CD8-positive, alpha-beta T cell (primary cell): ENCODE measurements at regions of chr19 and their contacts with region 1.

Region 1: GRCh38 chr19:680287-681028 is 4.3 kb downstream of the FSTL3 start:
- DNase-seq: peak; percentile 99 to 100 (median 100)
- ATAC-seq: peak; percentile 79
- H3K4me3 ChIP-seq: peak overlapping the region; percentile 59 to 94
- H3K4me3 Mint-ChIP-seq: peak overlapping the region; percentile 91
- H3K27ac ChIP-seq: peak overlapping the region; percentile 73 to 88
- H3K27ac Mint-ChIP-seq: peak overlapping the region; percentile 97
- H3K4me1 ChIP-seq: peaks cover 20% of the 10 kb centered on the region
- H3K4me1 Mint-ChIP-seq: peaks cover 8% of the 10 kb centered on the region
- H3K27me3 ChIP-seq: peaks cover 0 to 16% of the 10 kb centered on the region in 2 experiments
- H3K27me3 Mint-ChIP-seq: peaks cover 4% of the 10 kb centered on the region
- CTCF ChIP-seq: peak; percentile 37

Region 2: DNA sequence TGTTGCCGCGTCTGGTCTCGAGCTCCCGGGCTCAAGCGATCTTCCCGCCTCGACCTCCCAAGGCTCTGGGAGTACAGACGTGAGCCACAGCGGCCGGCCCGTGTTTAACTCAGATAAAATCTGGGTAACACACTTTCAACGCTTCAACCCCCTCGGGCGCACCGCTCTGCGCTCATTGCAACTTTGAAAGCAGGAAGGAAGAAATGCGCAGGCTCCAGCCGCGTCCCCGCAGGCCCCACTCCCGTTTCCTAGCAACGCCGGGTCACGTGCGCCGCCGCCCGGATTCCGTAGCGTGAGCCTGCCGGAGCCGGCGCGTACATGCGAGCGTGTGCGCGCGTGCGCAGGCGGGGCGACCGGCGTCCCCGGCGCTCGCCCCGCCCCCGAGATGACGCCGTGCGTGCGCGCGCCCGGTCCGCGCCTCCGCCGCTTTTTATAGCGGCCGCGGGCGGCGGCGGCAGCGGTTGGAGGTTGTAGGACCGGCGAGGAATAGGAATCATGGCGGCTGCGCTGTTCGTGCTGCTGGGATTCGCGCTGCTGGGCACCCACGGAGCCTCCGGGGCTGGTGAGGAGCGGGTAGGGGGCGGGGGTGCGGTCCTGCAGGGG is 108.2 kb before region 1 on chr19 and contains the start of gene BSG:
- CTCF ChIA-PET with region 1: no interaction called
- POLR2A ChIA-PET with region 1: no interaction called
- intact Hi-C with region 1: loop called (anchors 1 kb)
- DNase-seq: peak; percentile 96 to 100 (median 99)
- ATAC-seq: peak; percentile 79
- H3K4me3 ChIP-seq: peak within 1 kb of the TSS; percentile 85 to 98
- H3K4me3 Mint-ChIP-seq: peak within 1 kb of the TSS; percentile 89
- H3K27ac ChIP-seq: peak within 1 kb of the TSS; percentile 86 to 90
- H3K27ac Mint-ChIP-seq: peak within 1 kb of the TSS; percentile 96
- H3K4me1 ChIP-seq: peaks cover 26% of the 10 kb centered on the region
- H3K4me1 Mint-ChIP-seq: peaks cover 38% of the 10 kb centered on the region
- H3K27me3 ChIP-seq: no peaks in the 10 kb centered on the region
- H3K27me3 Mint-ChIP-seq: no peaks in the 10 kb centered on the region
- CTCF ChIP-seq: no peak
- total RNA-seq, gene BSG: 76.2 to 81.2 TPM

Region 3: DNA sequence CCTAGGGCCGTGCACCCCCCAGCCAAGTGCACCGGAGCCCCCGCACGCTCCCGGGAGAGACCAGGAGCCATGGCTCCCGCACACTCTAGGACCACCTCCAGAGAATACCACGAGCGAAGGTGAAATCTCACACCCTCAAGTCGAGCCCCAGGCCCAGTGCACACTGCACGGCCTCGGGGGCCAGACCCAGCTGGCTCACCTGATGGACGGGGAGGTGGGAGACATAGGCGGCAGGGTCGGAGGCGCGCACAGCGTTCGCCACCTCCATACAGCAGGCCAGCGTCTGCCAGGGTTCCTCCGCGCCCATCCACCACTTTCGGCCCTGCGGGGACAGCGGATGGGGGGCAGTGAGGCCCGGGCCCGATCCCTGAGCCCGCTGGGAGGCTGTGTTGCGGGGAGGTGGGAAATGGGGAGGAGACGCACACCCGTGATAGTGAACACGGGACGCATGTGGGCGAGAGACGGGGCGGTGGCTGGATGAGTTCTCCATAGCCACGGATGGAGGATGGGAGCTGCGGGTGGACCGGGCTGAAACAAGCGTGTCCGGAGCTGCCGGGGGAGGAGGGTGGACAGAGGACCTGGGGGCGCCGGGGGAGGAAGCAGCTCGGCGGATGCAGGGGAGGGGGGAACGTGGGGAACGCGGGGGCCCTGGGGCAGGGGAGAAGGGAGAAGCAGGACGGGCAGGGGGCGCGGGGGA is 60.1 kb before region 1 on chr19:
- CTCF ChIA-PET with region 1: no interaction called
- POLR2A ChIA-PET with region 1: no interaction called
- intact Hi-C with region 1: no loop called
- DNase-seq: no peak
- ATAC-seq: no peak
- H3K4me3 ChIP-seq: no peak overlapping the region
- H3K4me3 Mint-ChIP-seq: no peak overlapping the region
- H3K27ac ChIP-seq: no peak overlapping the region
- H3K27ac Mint-ChIP-seq: no peak overlapping the region
- H3K4me1 ChIP-seq: no peaks in the 10 kb centered on the region
- H3K4me1 Mint-ChIP-seq: peaks cover 4% of the 10 kb centered on the region
- H3K27me3 ChIP-seq: no peaks in the 10 kb centered on the region
- H3K27me3 Mint-ChIP-seq: peaks cover 2% of the 10 kb centered on the region
- CTCF ChIP-seq: no peak

Region 4: GRCh38 chr19:633068-633785 is 47.2 kb before region 1 on chr19 and contains the start of gene POLRMT:
- CTCF ChIA-PET with region 1: no interaction called
- POLR2A ChIA-PET with region 1: interaction called, 4 read pairs
- intact Hi-C with region 1: loop called in 1 of 2 experiments (anchors 1 kb)
- DNase-seq: peak; percentile 88 to 99 (median 95)
- ATAC-seq: peak; percentile 95
- H3K4me3 ChIP-seq: peak within 1 kb of the TSS; percentile 89 to 93
- H3K4me3 Mint-ChIP-seq: peak within 1 kb of the TSS; percentile 95
- H3K27ac ChIP-seq: peak within 1 kb of the TSS; percentile 61 to 72
- H3K27ac Mint-ChIP-seq: peak within 1 kb of the TSS; percentile 94
- H3K4me1 ChIP-seq: peaks cover 22% of the 10 kb centered on the region
- H3K4me1 Mint-ChIP-seq: peaks cover 30% of the 10 kb centered on the region
- H3K27me3 ChIP-seq: no peaks in the 10 kb centered on the region
- H3K27me3 Mint-ChIP-seq: no peaks in the 10 kb centered on the region
- CTCF ChIP-seq: no peak
- total RNA-seq, gene POLRMT: 48.6 to 53.7 TPM

Region 5: GRCh38 chr19:703651-704446 is 23.4 kb after region 1 on chr19:
- CTCF ChIA-PET with region 1: no interaction called
- POLR2A ChIA-PET with region 1: interaction called, 3 read pairs
- intact Hi-C with region 1: loop called (anchors 1 kb)
- DNase-seq: peak; percentile 28 to 76 (median 63)
- ATAC-seq: peak; percentile 77
- H3K4me3 ChIP-seq: peak overlapping the region in 1 of 2 experiments; percentile 39
- H3K4me3 Mint-ChIP-seq: no peak overlapping the region
- H3K27ac ChIP-seq: no peak overlapping the region
- H3K27ac Mint-ChIP-seq: no peak overlapping the region
- H3K4me1 ChIP-seq: peaks cover 8% of the 10 kb centered on the region
- H3K4me1 Mint-ChIP-seq: peaks cover 9% of the 10 kb centered on the region
- H3K27me3 ChIP-seq: peaks cover 0 to 8% of the 10 kb centered on the region in 2 experiments
- H3K27me3 Mint-ChIP-seq: peaks cover 30% of the 10 kb centered on the region
- CTCF ChIP-seq: no peak

Region 6: DNA sequence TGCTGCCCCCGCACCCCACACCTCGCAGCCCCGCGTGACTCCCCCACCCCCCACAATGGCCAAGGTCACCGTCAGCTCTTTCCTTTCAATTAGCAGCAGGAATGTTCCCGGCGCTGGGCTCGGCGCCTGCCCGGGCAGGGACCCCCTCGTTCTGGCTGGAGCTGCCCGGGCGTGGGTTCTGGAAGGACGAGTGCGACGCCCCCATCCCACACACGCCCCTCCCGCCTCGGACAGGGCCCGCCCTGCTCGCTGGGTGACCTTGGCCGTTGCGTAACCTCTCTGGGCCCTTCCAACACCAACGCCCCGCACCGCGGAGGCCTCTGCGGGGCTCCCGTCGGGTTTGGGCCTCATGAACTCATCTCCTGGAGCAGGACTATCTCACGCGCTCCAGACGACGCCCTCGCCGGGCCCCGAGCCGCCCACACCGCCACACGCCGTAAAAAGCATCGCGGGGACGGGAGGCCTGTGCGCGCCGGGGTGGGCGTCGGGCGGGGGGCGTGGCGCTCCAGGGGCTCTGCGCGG is 38.6 kb after region 1 on chr19:
- CTCF ChIA-PET with region 1: no interaction called
- POLR2A ChIA-PET with region 1: no interaction called
- intact Hi-C with region 1: no loop called
- DNase-seq: no peak
- ATAC-seq: no peak
- H3K4me3 ChIP-seq: no peak overlapping the region
- H3K4me3 Mint-ChIP-seq: no peak overlapping the region
- H3K27ac ChIP-seq: no peak overlapping the region
- H3K27ac Mint-ChIP-seq: no peak overlapping the region
- H3K4me1 ChIP-seq: no peaks in the 10 kb centered on the region
- H3K4me1 Mint-ChIP-seq: no peaks in the 10 kb centered on the region
- H3K27me3 ChIP-seq: peaks cover 4 to 12% of the 10 kb centered on the region in 2 experiments
- H3K27me3 Mint-ChIP-seq: peaks cover 24% of the 10 kb centered on the region
- CTCF ChIP-seq: no peak

Region 7: GRCh38 chr19:996051-996838 is 315.8 kb after region 1 on chr19:
- CTCF ChIA-PET with region 1: no interaction called
- POLR2A ChIA-PET with region 1: no interaction called
- intact Hi-C with region 1: loop called in 1 of 2 experiments (anchors 2 kb)
- DNase-seq: peak; percentile 44 to 97 (median 84)
- ATAC-seq: peak; percentile 79
- H3K4me3 ChIP-seq: peak overlapping the region; percentile 29 to 36
- H3K4me3 Mint-ChIP-seq: peak overlapping the region; percentile 72
- H3K27ac ChIP-seq: peak overlapping the region; percentile 16 to 27
- H3K27ac Mint-ChIP-seq: peak overlapping the region; percentile 92
- H3K4me1 ChIP-seq: peaks cover 27% of the 10 kb centered on the region
- H3K4me1 Mint-ChIP-seq: peaks cover 13% of the 10 kb centered on the region
- H3K27me3 ChIP-seq: peaks cover 15 to 22% of the 10 kb centered on the region in 2 experiments
- H3K27me3 Mint-ChIP-seq: peaks cover 15% of the 10 kb centered on the region
- CTCF ChIP-seq: no peak